Dendritic cell treated with granulocyte-macrophage colony-stimulating factor and Interleukin-4, amounts not matched to agents 40 ng/mL and 50 ng/mL, for 4 days (primary cell): ENCODE measurements at regions of chr4 and their contacts with region 1.

Region 1: GRCh38 chr4:10253755-10254154 is 137.2 kb upstream of the WDR1 start:
- H3K4me3 Mint-ChIP-seq: no peak overlapping the region
- H3K27ac Mint-ChIP-seq: no peak overlapping the region
- H3K4me1 Mint-ChIP-seq: no peaks in the 10 kb centered on the region
- H3K27me3 Mint-ChIP-seq: peaks cover 29% of the 10 kb centered on the region

Region 2: DNA sequence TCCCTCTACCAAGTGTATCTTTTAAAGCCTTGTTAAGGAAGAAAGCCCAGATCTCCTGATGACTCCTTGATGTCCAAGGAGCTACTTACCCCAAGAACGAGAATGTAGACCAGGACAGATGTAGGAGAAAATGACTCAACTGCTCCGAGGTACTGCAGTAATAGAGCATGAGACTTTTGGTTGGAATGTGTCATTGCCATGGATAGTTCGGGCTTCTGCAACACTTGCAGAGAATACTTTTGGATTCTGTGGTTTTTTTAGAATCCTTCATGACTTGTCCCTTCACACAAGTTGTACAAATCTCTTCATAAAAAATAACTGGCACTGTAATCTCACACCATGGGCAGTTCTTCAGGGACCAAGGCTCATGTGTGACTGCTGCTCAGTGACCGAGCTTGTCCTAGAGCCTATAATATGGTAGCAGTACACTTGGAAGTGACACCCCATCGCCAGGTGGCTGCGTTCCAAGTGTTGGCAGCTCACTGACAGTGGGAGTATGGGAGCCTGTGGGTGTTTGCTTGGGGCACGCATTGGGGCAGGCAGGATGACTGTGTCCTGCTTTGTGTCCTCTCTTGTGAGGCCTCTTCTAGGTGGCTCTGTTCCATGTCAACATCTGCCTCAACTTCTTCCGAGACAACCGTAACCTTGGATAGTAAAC is 49.2 kb before region 1 on chr4:
- intact Hi-C with region 1: loop called (anchors 10 kb)
- H3K4me3 Mint-ChIP-seq: no peak overlapping the region
- H3K27ac Mint-ChIP-seq: no peak overlapping the region
- H3K4me1 Mint-ChIP-seq: peaks cover 7% of the 10 kb centered on the region
- H3K27me3 Mint-ChIP-seq: peaks cover 14% of the 10 kb centered on the region